Activated CD4-positive, alpha-beta T cell treated with anti-CD3 and anti-CD28 coated beads for 36 hours (primary cell): ENCODE measurements at regions of chr10 and their contacts with region 1.

Region 1: DNA sequence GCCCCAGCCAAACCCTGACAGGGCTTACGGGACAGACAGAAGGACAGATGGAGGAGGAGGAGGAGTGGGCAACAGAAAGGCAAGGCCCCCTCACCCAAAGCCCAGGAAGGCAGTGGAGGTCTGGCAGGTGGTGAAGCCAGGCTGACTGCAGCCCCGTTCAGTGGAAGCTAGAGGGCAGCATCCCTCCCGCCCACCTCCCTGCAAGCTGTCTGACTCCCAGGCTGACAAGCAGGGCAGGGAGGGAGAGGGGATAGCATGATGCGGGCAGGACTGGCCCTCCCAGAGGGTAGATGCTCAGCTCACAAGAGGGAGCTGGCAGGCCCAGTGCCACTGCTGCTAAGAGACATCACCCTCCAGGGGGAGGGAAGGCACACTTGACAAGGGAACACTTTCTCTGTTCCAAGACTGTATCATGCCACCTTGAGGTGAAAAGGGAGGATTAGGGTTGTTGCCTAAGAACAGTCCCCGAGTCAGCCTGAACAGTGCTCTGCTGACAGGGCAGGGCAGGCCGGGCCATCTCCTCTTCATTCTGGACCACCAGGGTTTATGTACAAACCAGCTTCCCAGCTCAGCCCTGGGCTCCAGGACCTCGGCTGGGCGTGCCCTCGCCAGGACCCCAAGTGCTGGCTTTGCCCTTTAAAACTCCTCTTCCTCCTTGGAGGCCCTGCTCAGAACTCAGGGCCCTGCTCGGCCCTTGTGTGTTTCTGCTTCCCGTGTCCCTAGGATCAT is 61.8 kb downstream of the RASGEF1A start:
- DNase-seq: peak; percentile 84
- ATAC-seq: peak; percentile 76
- H3K4me3 Mint-ChIP-seq: no peak overlapping the region
- H3K27ac Mint-ChIP-seq: no peak overlapping the region
- H3K4me1 Mint-ChIP-seq: peaks cover 4% of the 10 kb centered on the region
- H3K27me3 Mint-ChIP-seq: no peaks in the 10 kb centered on the region

Region 2: GRCh38 chr10:42933448-42934340 is 271.4 kb before region 1 on chr10:
- CTCF ChIA-PET with region 1: no interaction called
- POLR2A ChIA-PET with region 1: no interaction called
- intact Hi-C with region 1: loop called in 1 of 2 experiments (anchors 5 kb)
- DNase-seq: peak; percentile 47
- ATAC-seq: peak; percentile 55
- H3K4me3 Mint-ChIP-seq: peak overlapping the region; percentile 64
- H3K27ac Mint-ChIP-seq: no peak overlapping the region
- H3K4me1 Mint-ChIP-seq: peaks cover 10% of the 10 kb centered on the region
- H3K27me3 Mint-ChIP-seq: peaks cover 11% of the 10 kb centered on the region

Region 3: GRCh38 chr10:43166880-43167497 is 38.1 kb before region 1 on chr10:
- CTCF ChIA-PET with region 1: interaction called, 10 read pairs
- POLR2A ChIA-PET with region 1: no interaction called
- intact Hi-C with region 1: no loop called
- DNase-seq: no peak
- ATAC-seq: peak; percentile 16
- H3K4me3 Mint-ChIP-seq: no peak overlapping the region
- H3K27ac Mint-ChIP-seq: no peak overlapping the region
- H3K4me1 Mint-ChIP-seq: peaks cover 29% of the 10 kb centered on the region
- H3K27me3 Mint-ChIP-seq: no peaks in the 10 kb centered on the region

Region 4: GRCh38 chr10:43255634-43256431 is 50.7 kb after region 1 on chr10:
- CTCF ChIA-PET with region 1: interaction called, 6 read pairs
- POLR2A ChIA-PET with region 1: no interaction called
- intact Hi-C with region 1: loop called in 1 of 2 experiments (anchors 2 kb)
- DNase-seq: peak; percentile 67
- ATAC-seq: peak; percentile 96
- H3K4me3 Mint-ChIP-seq: no peak overlapping the region
- H3K27ac Mint-ChIP-seq: no peak overlapping the region
- H3K4me1 Mint-ChIP-seq: no peaks in the 10 kb centered on the region
- H3K27me3 Mint-ChIP-seq: no peaks in the 10 kb centered on the region

Region 5: DNA sequence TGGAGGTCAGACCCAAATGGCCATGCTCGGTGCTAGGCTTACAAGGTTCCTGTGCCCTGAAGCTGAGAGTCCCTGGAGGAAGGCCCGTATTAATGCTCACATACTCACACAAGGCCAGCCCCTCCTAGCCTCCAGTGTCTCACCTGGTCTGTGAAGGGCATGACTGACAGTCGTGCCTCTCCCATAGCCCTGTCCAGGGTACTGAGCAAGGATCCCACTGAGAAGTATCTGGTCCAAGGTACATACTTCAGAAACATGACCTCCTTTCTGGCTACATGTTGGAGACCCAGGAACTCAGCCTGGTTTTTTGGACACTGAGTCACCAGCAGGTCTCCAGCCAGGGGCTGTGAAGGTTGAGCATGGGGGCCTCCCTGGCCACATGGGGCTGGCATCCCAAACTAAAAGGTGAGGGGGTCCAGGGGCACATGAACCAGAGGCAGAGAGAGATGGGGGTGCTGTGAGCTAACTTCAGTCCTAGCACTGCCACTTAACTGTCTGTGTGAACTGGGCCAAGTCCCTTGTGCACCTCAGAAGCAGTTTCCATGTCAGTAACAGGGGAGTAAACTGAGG is 79.3 kb after region 1 on chr10:
- CTCF ChIA-PET with region 1: no interaction called
- POLR2A ChIA-PET with region 1: no interaction called
- intact Hi-C with region 1: no loop called
- DNase-seq: peak; percentile 47
- ATAC-seq: peak; percentile 35
- H3K4me3 Mint-ChIP-seq: no peak overlapping the region
- H3K27ac Mint-ChIP-seq: no peak overlapping the region
- H3K4me1 Mint-ChIP-seq: peaks cover 24% of the 10 kb centered on the region
- H3K27me3 Mint-ChIP-seq: peaks cover under 1% of the 10 kb centered on the region

Region 6: DNA sequence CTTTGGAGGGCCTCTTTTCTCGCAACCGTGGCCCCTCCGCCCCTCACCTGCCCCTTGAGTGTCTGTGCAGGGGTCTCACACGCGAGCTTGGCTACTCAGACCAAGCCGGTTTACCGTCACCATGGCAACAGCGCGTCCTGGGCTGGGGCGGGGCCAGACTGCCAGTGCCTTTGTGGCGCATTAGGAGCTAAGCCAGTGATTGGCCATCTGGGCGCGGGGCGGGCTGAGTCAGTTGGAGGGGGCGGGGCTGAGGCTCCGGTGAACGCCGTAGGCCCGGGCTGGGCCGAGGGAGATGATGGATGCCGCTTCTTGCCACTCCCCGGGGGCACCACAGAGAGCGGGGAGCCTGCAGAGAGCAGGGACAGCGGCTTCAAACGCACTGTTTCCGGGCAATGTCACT is 117.7 kb after region 1 on chr10:
- CTCF ChIA-PET with region 1: no interaction called
- POLR2A ChIA-PET with region 1: no interaction called
- intact Hi-C with region 1: no loop called
- DNase-seq: peak; percentile 93
- ATAC-seq: peak; percentile 100
- H3K4me3 Mint-ChIP-seq: no peak overlapping the region
- H3K27ac Mint-ChIP-seq: no peak overlapping the region
- H3K4me1 Mint-ChIP-seq: peaks cover 9% of the 10 kb centered on the region
- H3K27me3 Mint-ChIP-seq: peaks cover 2% of the 10 kb centered on the region

Region 7: DNA sequence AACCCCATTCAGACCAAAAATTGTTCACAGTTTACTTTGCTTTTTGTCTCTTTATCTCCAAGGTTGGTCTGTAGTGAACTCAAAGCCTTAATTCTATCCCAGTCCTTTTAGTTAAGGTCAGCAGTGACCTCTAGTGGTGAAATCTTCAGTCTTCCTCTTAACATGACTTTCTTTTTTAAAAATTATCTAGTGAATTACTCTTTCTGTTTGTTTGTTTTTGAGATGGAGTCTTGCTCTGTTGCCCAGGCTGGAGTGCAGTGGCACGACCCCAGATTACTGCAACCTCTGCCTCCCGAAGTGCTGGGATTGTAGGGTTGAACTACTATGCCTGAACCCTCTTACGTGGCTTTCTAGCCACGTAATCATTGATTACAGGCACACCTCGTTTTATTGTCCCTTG is 256.8 kb after region 1 on chr10:
- CTCF ChIA-PET with region 1: interaction called, 4 read pairs
- POLR2A ChIA-PET with region 1: no interaction called
- intact Hi-C with region 1: loop called in 1 of 2 experiments (anchors 1 kb)
- DNase-seq: peak; percentile 13
- ATAC-seq: peak; percentile 86
- H3K4me3 Mint-ChIP-seq: no peak overlapping the region
- H3K27ac Mint-ChIP-seq: no peak overlapping the region
- H3K4me1 Mint-ChIP-seq: peaks cover 12% of the 10 kb centered on the region
- H3K27me3 Mint-ChIP-seq: no peaks in the 10 kb centered on the region

Region 8: DNA sequence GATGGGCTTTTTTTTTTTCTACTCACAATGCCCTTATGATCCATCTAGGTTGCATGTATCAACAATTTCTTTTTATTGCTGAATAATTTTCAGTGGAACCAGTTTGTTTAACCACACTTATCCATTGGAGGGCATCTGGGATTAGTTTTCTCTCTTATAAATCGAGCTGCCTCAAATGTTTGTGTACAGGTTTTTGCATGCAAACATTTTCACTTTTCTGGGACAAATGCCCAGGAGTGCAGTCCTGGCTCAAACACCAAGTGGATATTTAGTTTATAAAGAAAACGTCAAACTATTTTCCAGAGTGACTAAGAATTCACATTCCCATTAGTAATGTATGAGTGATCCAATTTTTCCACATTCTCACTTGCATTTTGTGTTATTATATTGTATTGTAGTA is 866.4 kb after region 1 on chr10:
- CTCF ChIA-PET with region 1: no interaction called
- POLR2A ChIA-PET with region 1: no interaction called
- intact Hi-C with region 1: no loop called
- DNase-seq: no peak
- ATAC-seq: no peak
- H3K4me3 Mint-ChIP-seq: no peak overlapping the region
- H3K27ac Mint-ChIP-seq: no peak overlapping the region
- H3K4me1 Mint-ChIP-seq: no peaks in the 10 kb centered on the region
- H3K27me3 Mint-ChIP-seq: peaks cover 2% of the 10 kb centered on the region